Head of caudate nucleus (tissue), 42 donors: ENCODE measurements at regions of chr18 and their contacts with region 1.

Region 1: DNA sequence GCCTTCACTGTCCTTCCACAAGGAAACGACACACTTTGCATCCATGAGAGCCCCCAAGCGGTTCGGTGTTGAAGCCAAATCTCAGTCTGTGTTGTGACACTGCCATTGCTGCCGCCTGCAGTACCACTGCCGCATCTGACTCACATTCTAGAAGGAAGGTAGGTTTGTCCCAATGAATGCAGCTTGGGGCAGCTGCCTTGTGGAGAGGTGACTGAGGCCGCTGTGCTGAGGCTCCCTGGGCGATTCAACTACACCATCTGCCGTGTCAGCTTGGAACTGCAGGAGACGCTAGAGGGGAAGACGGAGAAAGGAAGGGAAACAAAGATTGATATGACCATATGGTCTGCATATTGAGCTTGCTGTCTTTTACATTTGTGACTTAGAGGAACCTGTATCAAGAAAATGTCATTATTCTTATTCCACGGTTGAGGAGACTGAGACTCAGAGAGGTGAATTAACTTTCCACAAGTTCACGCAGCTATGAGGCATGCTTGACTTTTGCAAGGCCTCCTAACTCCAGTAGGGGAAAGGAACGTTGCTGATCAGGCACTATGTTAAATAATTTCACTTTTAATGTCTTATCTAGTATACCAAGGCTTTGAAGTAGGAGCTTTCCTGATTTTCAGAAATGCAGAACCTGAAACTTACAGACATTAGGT is 43.5 kb upstream of the LMAN1 start:
- DNase-seq: peak; percentile 38 to 91 (median 74)

Region 2: DNA sequence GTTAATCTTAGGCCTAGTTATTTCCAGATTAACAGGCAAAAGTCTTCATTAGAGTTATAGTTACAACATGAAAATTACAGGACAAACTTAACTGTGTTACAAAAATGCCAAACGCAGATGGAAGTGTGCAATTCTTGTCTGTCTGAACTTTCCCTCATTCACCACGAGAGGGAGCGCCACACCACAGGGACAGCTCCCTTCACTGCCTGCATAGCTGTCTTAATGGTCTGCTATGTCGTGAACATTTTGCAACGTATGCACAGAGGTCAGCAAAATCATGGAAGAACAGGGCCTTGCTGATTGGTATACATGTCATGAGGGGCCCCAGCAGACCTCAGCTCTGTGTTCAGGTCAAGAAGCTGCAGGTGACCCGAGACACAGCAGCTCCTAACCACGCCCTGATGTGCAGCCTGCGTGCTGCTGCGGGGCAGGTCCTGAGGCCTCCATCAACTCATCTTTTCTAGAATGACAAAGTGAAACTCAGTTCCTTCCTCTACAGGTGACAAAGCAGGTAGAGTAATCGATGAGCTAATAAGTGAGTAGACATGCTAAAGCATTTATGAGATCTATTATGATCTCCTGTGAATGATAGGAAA is 1520.6 kb before region 1 on chr18:
- intact Hi-C with region 1: no loop called
- DNase-seq: peak; percentile 53 to 90 (median 76)

Region 3: DNA sequence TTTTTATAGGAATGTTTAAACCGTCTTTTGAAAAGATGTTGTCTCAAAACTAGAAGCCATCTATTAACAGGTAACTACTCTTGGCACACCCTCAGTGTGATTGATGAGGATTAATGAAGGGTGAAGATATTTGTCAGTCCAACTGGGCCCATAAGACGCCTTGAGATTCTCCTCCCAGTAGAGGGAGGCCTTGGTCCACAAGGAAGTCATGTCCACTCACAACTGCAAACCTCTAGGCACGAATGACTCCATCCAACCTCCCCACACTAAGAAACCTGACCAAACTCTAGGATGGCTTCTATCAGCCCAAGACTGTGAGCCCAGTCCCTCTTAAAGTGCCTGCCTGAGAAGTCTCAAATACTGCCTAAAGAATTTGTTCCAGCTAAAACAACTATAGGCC is 201.8 kb before region 1 on chr18:
- intact Hi-C with region 1: no loop called
- DNase-seq: no peak

Region 4: DNA sequence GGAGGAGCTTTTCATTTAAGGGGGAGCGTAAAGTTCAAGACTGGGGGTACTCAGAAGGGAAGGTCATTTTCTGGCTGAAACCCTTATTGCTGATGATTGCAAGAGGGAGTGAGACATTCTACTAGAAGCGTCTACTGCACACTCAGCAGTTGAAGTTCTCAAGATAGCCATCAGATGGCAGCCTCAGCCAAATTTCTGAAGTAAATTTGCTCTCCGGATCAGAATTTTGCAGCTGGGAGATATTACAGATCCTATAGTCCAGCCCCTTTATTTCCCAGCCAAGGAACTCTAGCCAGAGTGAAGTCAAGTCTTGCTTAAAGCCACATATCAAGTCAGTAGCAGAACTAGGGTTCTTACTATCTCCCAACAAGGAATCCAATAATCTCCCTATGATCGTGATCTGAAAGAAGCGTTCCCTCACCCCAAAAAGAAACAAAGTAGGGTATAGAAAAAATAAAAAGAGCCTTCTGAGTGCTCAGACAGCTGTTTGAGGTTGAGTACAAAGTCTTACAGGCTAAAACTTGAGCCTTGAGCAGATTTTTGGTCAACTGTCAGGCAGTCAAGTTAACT is 153.3 kb before region 1 on chr18:
- intact Hi-C with region 1: loop called (anchors 5 kb)
- DNase-seq: peak in 35 of 42 donors; percentile 9 to 84 (median 63)

Region 5: GRCh38 chr18:59308248-59308937 is 94.2 kb before region 1 on chr18:
- intact Hi-C with region 1: loop called (anchors 5 kb)
- DNase-seq: peak; percentile 33 to 89 (median 74)